Activated naive CD4-positive, alpha-beta T cell treated with anti-CD3 and anti-CD28 coated beads for 36 hours (primary cell): ENCODE measurements at regions of chr6 and their contacts with region 1.

Region 1: GRCh38 chr6:26568601-26569432 is 27.9 kb upstream of the ABT1 start:
- DNase-seq: peak; percentile 99
- H3K4me3 Mint-ChIP-seq: peak overlapping the region; percentile 95
- H3K27ac Mint-ChIP-seq: peak overlapping the region; percentile 91
- H3K4me1 Mint-ChIP-seq: peaks cover 33% of the 10 kb centered on the region
- H3K27me3 Mint-ChIP-seq: peaks cover 4% of the 10 kb centered on the region

Region 2: DNA sequence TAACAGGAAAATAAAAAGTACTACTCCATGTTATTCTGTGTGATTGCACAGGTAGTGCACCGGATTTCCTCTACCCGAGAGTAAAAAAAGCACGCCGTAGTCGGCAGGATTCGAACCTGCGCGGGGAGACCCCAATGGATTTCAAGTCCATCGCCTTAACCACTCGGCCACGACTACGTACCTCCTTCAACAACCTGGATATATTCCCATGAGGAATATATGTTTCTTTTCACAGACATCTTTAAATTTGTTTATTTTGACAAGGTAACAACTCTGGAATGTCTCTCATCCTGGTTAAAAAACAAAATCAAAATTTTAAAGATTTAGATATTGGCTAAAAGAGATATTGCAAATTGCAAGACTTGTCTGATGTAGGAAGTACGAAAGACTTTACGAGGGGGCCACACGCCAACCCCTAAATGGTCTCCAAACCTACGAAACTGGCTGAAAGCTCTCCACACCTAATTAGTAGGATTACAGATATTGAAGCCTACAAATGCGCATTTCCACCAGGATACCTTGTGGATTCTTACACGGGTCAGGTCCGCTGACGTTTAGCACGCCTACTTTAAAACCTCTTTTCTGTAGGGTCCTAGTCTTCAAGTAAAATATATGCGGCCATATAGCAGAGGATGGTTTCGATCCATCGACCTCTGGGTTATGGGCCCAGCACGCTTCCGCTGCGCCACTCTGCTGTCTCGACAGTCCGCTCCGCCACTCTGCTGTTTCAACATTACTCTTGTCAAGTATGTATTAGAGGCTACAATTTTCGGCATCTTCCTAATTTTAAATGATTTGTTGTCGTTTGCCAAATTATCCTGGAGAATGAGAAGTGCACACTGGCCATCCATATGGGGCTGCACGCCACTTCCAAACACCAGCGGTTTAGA is 256.1 kb before region 1 on chr6:
- CTCF ChIA-PET with region 1: no interaction called
- intact Hi-C with region 1: loop called (anchors 1 kb)
- DNase-seq: peak; percentile 95
- H3K4me3 Mint-ChIP-seq: peak overlapping the region; percentile 81
- H3K27ac Mint-ChIP-seq: peak overlapping the region; percentile 83
- H3K4me1 Mint-ChIP-seq: peaks cover 28% of the 10 kb centered on the region
- H3K27me3 Mint-ChIP-seq: no peaks in the 10 kb centered on the region

Region 3: DNA sequence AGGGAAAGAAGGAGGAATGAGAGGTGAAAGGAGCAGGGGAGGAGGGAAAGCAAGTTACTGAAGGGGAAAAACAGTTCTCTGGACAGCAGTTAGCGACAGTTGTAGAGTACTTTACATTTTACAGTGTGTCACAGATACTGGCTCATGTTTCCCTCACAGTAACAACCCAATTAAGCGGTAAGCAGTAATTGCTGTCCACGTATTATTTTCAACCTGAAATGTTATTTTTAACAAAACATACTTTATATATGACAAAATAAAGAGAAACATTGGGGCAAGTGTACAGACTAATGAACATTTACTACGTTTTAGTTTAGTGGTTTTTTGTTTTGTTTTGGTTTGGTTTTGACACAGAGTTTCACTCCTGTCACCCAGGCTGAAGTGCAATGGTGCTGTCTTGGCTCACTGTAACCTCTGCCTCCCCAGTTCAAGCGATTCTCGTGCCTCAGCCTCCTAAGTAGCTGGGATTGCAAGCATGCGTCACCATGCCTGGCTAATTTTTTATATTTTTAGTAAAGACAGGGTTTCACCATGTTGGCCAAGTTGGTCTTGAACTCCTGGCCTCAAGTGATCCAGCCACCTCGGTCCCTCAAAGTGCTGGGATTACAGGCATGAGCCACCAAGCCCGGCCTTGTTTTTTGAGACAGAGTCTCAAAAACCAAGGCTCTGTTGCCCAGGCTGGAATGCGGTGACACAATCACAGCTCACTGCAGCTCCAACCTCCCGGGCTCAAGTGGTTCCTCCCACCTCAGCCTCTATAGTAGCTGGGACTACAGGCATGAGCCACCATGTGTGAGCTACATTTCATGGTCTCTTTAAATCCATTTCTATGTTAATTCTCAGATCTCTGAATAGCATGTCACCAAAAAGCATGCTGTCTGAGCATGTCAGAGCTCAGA is 226.5 kb before region 1 on chr6:
- CTCF ChIA-PET with region 1: interaction called, 11 read pairs
- intact Hi-C with region 1: loop called (anchors 1 kb)
- DNase-seq: peak; percentile 53
- H3K4me3 Mint-ChIP-seq: peak overlapping the region; percentile 77
- H3K27ac Mint-ChIP-seq: peak overlapping the region; percentile 39
- H3K4me1 Mint-ChIP-seq: peaks cover 4% of the 10 kb centered on the region
- H3K27me3 Mint-ChIP-seq: peaks cover 2% of the 10 kb centered on the region

Region 4: GRCh38 chr6:26507658-26508057 is 61.2 kb before region 1 on chr6:
- CTCF ChIA-PET with region 1: no interaction called
- intact Hi-C with region 1: no loop called
- DNase-seq: no peak
- H3K4me3 Mint-ChIP-seq: no peak overlapping the region
- H3K27ac Mint-ChIP-seq: no peak overlapping the region
- H3K4me1 Mint-ChIP-seq: no peaks in the 10 kb centered on the region
- H3K27me3 Mint-ChIP-seq: peaks cover 15% of the 10 kb centered on the region

Region 5: GRCh38 chr6:26520853-26521599 is 47.8 kb before region 1 on chr6:
- CTCF ChIA-PET with region 1: no interaction called
- intact Hi-C with region 1: loop called (anchors 1 kb)
- DNase-seq: peak; percentile 90
- H3K4me3 Mint-ChIP-seq: peak overlapping the region; percentile 76
- H3K27ac Mint-ChIP-seq: peak overlapping the region; percentile 94
- H3K4me1 Mint-ChIP-seq: peaks cover 27% of the 10 kb centered on the region
- H3K27me3 Mint-ChIP-seq: peaks cover 2% of the 10 kb centered on the region

Region 6: DNA sequence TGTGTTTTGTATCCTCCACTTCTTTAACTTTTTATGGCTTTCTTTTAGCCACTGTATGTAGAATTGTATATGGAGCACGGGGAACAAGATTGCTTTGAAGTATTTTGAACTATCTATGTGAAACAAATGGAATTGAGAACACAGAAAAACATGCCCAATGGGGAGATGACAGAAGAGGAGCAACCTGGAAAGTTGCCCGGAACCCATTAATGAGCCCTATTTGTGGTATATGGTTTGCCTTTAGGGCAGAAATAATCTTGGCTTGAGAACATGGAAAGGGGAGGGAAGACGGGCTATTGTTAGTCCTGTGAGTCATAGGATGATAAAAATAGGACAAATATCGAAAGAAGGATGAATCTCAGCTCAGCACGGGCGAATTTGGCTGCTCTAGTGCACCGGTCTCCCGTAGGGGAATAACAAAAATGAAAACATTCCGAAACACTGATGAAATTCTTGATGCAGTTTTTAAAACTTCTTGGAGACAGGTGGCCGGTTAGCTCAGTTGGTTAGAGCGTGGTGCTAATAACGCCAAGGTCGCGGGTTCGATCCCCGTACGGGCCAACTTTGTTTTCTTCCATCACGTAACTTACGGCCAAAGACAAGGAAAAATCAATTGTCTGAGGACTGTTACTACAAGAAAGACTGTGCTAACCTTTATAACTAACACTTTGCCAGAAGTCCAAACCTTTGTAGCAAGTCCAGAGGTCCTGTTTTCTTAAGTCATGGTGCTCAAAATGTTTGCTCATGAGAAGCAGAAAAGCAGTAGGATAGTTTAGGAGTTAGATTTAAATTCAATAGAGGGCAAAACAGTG is 15.0 kb before region 1 on chr6:
- CTCF ChIA-PET with region 1: interaction called, 11 read pairs
- intact Hi-C with region 1: loop called (anchors 1 kb)
- DNase-seq: peak; percentile 91
- H3K4me3 Mint-ChIP-seq: no peak overlapping the region
- H3K27ac Mint-ChIP-seq: no peak overlapping the region
- H3K4me1 Mint-ChIP-seq: peaks cover 26% of the 10 kb centered on the region
- H3K27me3 Mint-ChIP-seq: no peaks in the 10 kb centered on the region

Region 7: GRCh38 chr6:27078734-27079357 is 510.0 kb after region 1 on chr6:
- CTCF ChIA-PET with region 1: interaction called, 6 read pairs
- intact Hi-C with region 1: loop called (anchors 1 kb)
- DNase-seq: peak; percentile 64
- H3K4me3 Mint-ChIP-seq: peak overlapping the region; percentile 67
- H3K27ac Mint-ChIP-seq: no peak overlapping the region
- H3K4me1 Mint-ChIP-seq: peaks cover 2% of the 10 kb centered on the region
- H3K27me3 Mint-ChIP-seq: peaks cover 26% of the 10 kb centered on the region